ENCODE measurements at regions of chr1 and their contacts with region 1.

Region 1: DNA sequence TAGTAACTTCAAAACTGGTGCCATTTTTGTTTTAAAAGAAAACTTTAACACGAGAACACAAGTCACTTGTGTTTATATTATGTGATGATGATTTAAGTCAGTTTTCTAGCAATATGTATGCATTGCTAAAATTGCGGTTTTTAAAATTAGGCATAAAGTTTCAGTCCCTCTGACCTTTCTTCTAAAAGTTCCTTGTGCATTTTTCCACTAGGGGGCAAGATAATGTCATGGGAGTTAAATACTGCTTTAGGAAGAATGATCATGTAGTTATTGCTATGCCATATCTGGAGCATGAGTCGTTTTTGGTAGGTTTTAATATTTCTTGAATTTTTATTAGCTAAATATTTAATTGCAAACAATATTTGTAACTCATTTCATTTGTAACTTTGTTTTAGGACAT is 10.7 kb downstream of the CDC7 start:
- DNase-seq: no peak
- H3K4me3 Mint-ChIP-seq: no peak overlapping the region
- H3K27ac Mint-ChIP-seq: no peak overlapping the region
- H3K4me1 Mint-ChIP-seq: no peaks in the 10 kb centered on the region
- H3K27me3 Mint-ChIP-seq: no peaks in the 10 kb centered on the region
- CTCF ChIP-seq: peak; percentile 47

Region 2: GRCh38 chr1:91374086-91374485 is 137.3 kb before region 1 on chr1:
- CTCF ChIA-PET with region 1: no interaction called
- intact Hi-C with region 1: no loop called
- DNase-seq: no peak
- H3K4me3 Mint-ChIP-seq: no peak overlapping the region
- H3K27ac Mint-ChIP-seq: no peak overlapping the region
- H3K4me1 Mint-ChIP-seq: no peaks in the 10 kb centered on the region
- H3K27me3 Mint-ChIP-seq: no peaks in the 10 kb centered on the region
- CTCF ChIP-seq: no peak

Region 3: DNA sequence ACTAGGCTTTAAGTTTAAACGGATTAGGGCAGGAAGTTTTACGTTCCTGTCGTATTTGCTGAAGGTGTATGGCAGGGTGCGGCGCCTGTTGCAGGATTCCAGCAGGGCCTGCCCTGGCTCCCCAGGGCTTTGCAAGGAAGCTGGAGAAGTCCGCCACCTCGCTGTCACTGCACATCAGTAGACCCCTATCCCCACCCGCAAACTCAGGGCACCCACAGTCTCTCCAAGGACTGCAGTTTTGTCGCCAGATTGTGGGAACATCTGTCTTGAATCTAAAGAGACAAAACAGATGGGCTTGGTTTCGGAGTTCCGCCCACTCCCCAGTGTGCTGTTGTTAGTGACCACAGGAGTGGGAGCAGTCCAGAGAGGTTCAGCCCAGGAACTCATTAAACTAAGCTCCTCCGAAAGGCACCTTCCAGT is 100.1 kb after region 1 on chr1:
- CTCF ChIA-PET with region 1: no interaction called
- intact Hi-C with region 1: loop called (anchors 5 kb)
- DNase-seq: peak; percentile 79
- H3K4me3 Mint-ChIP-seq: peak overlapping the region; percentile 43
- H3K27ac Mint-ChIP-seq: peak overlapping the region; percentile 64
- H3K4me1 Mint-ChIP-seq: peaks cover 58% of the 10 kb centered on the region
- H3K27me3 Mint-ChIP-seq: no peaks in the 10 kb centered on the region
- CTCF ChIP-seq: no peak

Region 4: DNA sequence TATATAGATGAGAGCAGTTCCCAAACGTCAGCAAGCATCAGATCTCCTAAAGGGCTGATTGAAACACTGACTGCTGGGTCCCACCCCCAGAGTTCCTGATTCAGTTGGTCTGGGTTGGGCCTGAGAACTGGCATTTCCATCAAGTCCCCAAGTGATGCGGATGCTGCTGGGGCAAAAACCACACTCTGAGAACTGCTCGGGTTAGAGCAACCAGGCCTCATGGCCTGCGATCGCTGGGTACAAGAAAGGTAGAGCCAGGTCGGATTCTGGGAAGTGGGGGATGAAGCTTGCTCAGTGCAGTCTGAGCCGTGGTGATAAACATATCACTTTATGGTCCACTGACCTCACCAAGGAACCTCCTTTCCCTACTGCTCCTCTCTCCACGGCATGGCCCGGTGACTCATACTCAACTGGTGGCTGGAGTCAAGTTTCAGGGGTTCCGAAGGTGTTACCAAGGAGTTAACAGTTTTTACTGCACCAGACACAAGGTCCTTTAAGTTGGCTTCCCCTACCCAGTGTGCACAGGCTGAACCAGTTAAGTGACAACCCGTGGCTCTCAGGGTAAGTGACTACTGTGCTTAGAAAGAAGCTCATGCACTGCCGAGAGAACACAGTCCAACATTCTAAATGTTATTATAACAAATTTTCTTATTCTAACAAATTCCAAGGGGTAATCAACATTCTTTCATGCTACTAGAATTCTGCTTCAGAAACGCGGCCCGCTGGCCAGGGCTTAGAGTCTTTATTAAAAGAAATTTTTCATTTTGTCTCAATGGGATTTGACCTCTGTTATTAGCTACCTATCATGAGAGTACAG is 221.1 kb after region 1 on chr1:
- CTCF ChIA-PET with region 1: no interaction called
- intact Hi-C with region 1: loop called (anchors 10 kb)
- DNase-seq: peak; percentile 79
- H3K4me3 Mint-ChIP-seq: peak overlapping the region; percentile 53
- H3K27ac Mint-ChIP-seq: peak overlapping the region; percentile 76
- H3K4me1 Mint-ChIP-seq: peaks cover 68% of the 10 kb centered on the region
- H3K27me3 Mint-ChIP-seq: no peaks in the 10 kb centered on the region
- CTCF ChIP-seq: no peak

Region 5: GRCh38 chr1:91924146-91924545 is 412.8 kb after region 1 on chr1:
- CTCF ChIA-PET with region 1: interaction called, 4 read pairs
- intact Hi-C with region 1: loop called (anchors 1 kb)
- DNase-seq: no peak
- H3K4me3 Mint-ChIP-seq: no peak overlapping the region
- H3K27ac Mint-ChIP-seq: peak overlapping the region; percentile 36
- H3K4me1 Mint-ChIP-seq: peaks cover 17% of the 10 kb centered on the region
- H3K27me3 Mint-ChIP-seq: no peaks in the 10 kb centered on the region
- CTCF ChIP-seq: no peak

Region 6: GRCh38 chr1:92291372-92291999 is 780.1 kb after region 1 on chr1:
- CTCF ChIA-PET with region 1: no interaction called
- intact Hi-C with region 1: loop called (anchors 5 kb)
- DNase-seq: no peak
- H3K4me3 Mint-ChIP-seq: no peak overlapping the region
- H3K27ac Mint-ChIP-seq: no peak overlapping the region
- H3K4me1 Mint-ChIP-seq: no peaks in the 10 kb centered on the region
- H3K27me3 Mint-ChIP-seq: no peaks in the 10 kb centered on the region
- CTCF ChIP-seq: peak; percentile 40

Region 7: DNA sequence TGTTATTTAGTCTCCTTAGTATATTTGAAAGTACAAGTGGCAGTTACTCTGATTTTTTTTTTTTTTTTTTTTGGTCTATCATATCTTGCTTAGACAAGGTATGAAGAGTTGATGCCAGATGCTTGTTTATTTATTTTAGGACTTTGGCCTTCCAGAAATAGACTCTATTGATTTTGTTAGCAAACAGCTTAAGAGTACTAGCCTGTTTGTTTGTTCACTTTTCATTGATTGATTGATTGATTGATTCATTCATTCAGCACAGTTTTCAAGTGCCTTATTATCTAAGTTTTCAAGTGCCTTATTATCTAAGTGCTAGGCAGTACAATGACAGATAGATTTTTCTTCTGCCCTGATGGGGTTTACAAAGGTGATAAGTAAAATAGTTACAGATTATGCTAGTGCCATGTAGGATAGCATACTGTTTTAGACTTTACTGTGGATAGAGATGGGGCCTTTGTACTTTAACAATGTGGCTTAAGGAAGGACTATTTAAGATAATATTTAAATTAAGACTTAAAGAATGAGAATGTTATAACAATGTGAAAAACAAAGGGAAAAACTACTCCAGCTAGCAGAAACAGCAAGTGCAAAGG is 1618.2 kb after region 1 on chr1:
- CTCF ChIA-PET with region 1: no interaction called
- intact Hi-C with region 1: no loop called
- DNase-seq: no peak
- H3K4me3 Mint-ChIP-seq: no peak overlapping the region
- H3K27ac Mint-ChIP-seq: no peak overlapping the region
- H3K4me1 Mint-ChIP-seq: no peaks in the 10 kb centered on the region
- H3K27me3 Mint-ChIP-seq: no peaks in the 10 kb centered on the region
- CTCF ChIP-seq: no peak